ENCODE measurements at regions of chr7 and their contacts with region 1.

Region 1: GRCh38 chr7:100190048-100190711 is 12.5 kb downstream of the STAG3 start:
- DNase-seq: no peak
- H3K4me3 ChIP-seq: no peak overlapping the region
- CTCF ChIP-seq: peak; percentile 22

Region 2: GRCh38 chr7:100171087-100171681 is 19.0 kb before region 1 on chr7:
- CTCF ChIA-PET with region 1: interaction called, 10 read pairs
- POLR2A ChIA-PET with region 1: no interaction called
- DNase-seq: no peak
- H3K4me3 ChIP-seq: no peak overlapping the region; the same call in 1 of the 2 replicates
- CTCF ChIP-seq: no peak

Region 3: DNA sequence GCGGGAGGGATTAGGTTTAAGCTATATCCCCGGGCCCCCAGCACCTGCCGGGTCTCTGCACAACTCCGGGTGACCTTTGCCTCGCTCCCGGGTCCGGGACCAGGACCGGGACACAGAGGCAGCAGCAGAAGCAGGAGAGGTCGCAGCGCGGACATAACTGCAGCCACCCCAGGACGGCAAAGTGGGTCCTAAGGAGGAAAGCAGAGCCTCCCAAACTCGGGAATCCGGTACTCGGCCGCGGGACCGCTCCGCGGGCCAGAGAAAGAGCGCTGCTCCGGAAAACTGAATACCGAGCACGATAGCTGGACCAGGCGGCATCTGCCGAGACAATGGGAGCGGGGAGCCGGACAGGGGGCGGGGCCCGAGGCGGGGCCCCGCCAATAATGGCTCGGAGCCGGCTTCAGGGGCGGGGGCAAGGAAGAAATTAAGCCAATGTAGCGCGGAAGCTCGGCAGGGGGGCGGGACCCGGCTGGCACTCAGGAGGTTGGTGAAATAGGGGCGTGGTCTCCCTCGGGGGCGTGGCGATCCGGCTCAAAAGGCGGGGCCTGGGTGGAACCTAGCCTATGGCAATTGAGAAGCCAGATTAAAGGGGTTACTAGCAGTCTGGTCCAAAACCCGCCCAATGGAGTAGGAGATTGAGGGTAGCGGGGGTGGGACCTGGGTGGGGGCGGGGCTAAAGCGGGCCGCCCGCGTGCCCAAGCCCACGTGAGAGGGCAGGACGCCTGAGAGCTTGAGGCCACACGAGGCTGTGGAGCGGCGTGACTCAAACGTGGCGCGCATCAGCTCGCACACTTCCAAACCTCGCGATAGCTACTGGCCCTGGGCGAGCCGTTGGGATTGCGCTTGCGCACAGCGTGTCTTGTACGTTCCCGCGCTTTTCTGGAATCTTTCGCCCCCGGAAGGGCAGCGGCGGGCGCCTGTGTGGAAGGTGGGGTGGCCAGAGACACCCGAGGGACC is 12.9 kb before region 1 on chr7 and contains the starts of genes GPC2 and STAG3:
- CTCF ChIA-PET with region 1: interaction called, 48 read pairs
- POLR2A ChIA-PET with region 1: no interaction called
- DNase-seq: peak; percentile 70
- H3K4me3 ChIP-seq: peak within 1 kb of the TSS; percentile 89
- CTCF ChIP-seq: no peak

Region 4: DNA sequence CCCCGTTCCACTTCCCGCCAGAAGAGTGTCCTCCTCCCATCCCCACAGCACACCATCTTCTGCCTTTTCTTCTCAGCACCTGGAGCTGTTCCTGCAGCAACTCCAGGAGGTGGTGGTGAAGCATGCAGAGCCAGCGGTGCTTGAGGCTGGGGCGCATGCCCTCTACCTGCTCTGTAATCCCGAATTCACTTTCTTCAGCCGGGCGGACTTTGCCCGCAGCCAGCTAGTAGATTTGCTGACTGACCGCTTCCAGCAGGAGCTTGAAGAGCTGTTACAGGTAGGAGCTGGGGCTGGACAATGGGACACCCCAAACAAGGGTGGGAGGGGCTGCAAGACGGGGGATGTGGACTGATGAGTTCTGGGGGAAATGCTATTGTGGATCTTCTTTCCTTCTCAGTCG is 10.5 kb after region 1 on chr7:
- CTCF ChIA-PET with region 1: interaction called, 29 read pairs
- POLR2A ChIA-PET with region 1: no interaction called
- DNase-seq: no peak
- H3K4me3 ChIP-seq: no peak overlapping the region
- CTCF ChIP-seq: no peak

Region 5: DNA sequence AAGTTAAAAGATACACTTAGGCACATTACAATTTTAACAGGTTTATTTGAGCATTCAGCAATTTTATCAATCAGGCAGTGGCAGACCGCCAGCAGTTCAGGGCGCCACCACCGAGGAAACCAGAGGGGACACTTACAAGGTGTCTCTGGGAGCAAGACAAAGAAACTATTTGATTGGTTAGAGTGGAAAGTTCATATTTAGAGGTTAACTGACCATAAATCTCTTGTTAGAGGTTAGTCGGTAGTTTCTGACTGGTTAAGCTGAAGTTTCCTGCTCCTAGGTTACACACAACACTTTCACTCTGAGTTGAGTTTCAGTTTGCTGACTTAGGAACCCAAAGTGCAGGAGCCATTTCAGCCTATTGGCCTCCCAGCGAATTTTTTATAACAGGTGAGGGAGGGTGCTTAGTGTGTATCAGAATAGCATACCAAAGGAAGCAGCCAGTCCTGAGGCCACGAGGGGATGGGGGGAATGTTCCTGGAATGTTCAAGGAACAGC is 18.8 kb after region 1 on chr7:
- CTCF ChIA-PET with region 1: interaction called, 10 read pairs
- POLR2A ChIA-PET with region 1: no interaction called
- DNase-seq: no peak
- H3K4me3 ChIP-seq: no peak overlapping the region
- CTCF ChIP-seq: no peak

Region 6: DNA sequence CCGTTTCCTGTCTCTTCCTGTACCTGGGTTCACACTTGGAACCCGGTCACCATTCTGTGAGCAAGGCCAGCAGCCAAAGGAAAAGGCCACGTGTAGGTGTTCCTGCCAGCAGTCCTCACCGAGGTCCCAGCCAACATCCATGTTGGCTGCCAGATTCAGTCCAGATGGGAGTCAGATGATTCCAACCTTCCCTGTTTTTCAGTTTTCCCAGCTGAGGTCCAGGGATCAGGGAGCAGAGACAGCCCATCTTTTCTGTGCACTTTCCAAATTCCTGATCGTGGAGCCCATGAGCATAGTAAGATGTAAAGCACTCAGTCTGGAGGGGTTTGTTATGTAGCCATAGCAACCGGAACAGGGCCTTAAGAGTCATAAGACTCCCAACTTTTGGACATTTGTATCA is 25.7 kb after region 1 on chr7:
- CTCF ChIA-PET with region 1: interaction called, 25 read pairs
- POLR2A ChIA-PET with region 1: no interaction called
- DNase-seq: no peak
- H3K4me3 ChIP-seq: no peak overlapping the region
- CTCF ChIP-seq: no peak